ENCODE measurements at regions of chr16 and their contacts with region 1.

Region 1: DNA sequence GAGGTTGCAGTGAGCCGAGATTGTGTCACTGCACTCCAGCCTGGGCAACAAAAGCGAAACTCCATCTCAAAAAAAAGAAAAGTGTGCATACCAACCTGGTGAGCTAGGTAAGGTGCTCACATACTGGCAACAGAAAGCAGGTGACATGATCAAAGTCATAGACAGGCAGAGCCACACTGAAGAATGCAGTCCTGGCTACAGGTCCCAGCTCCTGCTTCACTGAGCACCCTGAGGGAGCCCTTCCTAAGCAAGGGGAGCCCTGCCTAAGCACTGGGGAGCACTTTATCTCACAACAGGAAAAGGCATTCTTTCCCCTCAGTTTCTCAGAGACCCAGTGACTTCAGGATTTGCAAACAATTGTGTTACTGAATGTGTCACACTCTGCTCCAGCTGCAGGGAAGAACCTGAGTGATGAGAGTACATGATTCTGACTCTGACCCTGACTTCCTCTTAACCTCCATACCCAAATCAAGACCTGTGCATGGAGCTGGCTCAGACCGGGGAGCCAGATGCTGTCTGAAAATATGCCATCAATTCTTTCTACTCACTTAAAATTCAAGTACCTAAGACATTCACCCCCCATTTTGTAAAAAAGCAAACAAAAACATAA is 40.5 kb downstream of the ANKRD11 start:
- DNase-seq: no peak
- H3K4me3 ChIP-seq: no peak overlapping the region
- H3K27ac ChIP-seq: no peak overlapping the region
- H3K4me1 ChIP-seq: peaks cover 0 to 14% of the 10 kb centered on the region in 2 donors
- H3K27me3 ChIP-seq: no peaks in the 10 kb centered on the region
- CTCF ChIP-seq: no peak
- POLR2A ChIP-seq: no peak

Region 2: GRCh38 chr16:89436366-89436765 is 13.5 kb before region 1 on chr16:
- intact Hi-C with region 1: no loop called
- DNase-seq: no peak
- H3K4me3 ChIP-seq: no peak overlapping the region
- H3K27ac ChIP-seq: no peak overlapping the region
- H3K4me1 ChIP-seq: peaks cover 0 to under 1% of the 10 kb centered on the region in 2 donors
- H3K27me3 ChIP-seq: no peaks in the 10 kb centered on the region
- CTCF ChIP-seq: no peak
- POLR2A ChIP-seq: no peak

Region 3: DNA sequence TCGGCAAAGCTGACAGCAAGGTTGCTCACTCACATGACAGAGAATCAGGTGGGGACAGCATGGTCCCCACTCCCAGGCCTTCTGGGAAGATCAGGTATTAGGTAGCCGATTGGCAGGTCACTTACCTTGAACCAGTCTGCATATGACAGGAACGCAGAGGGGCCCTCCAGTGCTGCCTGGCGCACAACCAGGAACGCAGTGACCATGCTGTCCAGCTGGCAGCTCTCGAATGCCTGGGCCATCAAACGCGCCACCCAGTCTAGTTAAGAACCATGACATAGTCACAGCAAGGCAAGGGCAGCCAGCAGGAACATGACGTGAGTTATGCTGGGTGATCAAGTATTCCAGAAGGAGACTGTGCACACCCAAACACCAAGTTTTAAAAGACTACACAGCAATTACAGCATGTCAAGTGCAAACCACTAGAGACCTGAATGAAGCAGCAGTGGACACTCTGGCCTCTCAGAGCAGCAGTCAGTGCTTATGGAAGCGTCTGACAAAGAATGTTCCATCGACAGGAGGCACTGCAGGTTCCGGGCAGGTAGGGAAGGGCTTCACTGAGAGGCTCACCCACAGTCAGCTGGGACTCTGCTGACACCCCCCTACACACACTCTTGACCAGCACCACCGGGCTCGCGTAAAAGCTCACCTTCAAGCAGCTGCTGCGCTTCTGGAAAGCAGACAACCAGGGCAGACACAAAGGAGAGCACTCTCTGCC is 341.6 kb after region 1 on chr16:
- intact Hi-C with region 1: loop called (anchors 5 kb)
- DNase-seq: no peak
- H3K4me3 ChIP-seq: no peak overlapping the region
- H3K27ac ChIP-seq: no peak overlapping the region
- H3K4me1 ChIP-seq: no peaks in the 10 kb centered on the region
- H3K27me3 ChIP-seq: no peaks in the 10 kb centered on the region
- CTCF ChIP-seq: no peak
- POLR2A ChIP-seq: no peak